ENCODE measurements at regions of chr3 and their contacts with region 1.

Region 1: GRCh38 chr3:187738331-187739093 is 6.8 kb downstream of the BCL6 start:
- DNase-seq: peak; percentile 42 to 88
- ATAC-seq: peak; percentile 53 to 66 (median 56)
- H3K4me3 ChIP-seq: peak overlapping the region; percentile 90
- H3K4me3 Mint-ChIP-seq: peak overlapping the region; percentile 99
- H3K27ac ChIP-seq: peak overlapping the region; percentile 78
- H3K27ac Mint-ChIP-seq: peak overlapping the region; percentile 97 to 100
- H3K4me1 ChIP-seq: peaks cover 57% of the 10 kb centered on the region
- H3K4me1 Mint-ChIP-seq: peaks cover 57 to 60% of the 10 kb centered on the region in 2 donors
- H3K27me3 ChIP-seq: no peaks in the 10 kb centered on the region
- H3K27me3 Mint-ChIP-seq: no peaks in the 10 kb centered on the region
- CTCF ChIP-seq: peak; percentile 71

Region 2: DNA sequence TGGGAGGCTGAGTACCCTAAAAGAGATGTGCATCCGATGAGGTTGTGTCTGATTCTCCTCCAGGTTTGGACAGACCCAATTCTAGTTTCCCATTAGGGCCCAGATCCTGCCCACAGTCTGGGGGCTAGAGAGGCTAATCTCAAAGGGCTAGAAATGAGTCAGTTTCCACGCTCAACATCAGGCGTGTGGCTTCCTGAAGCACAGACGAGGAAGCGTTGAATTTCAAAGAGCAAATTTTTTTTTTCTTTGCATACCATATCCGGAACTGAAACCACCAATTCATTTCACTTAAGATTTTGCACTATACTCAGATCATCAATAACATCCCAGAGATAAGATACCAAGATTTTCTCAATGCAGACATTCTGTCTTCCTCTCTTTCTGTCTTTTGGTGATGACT is 180.5 kb after region 1 on chr3:
- intact Hi-C with region 1: loop called (anchors 2 kb)
- DNase-seq: peak; percentile 38 to 80
- ATAC-seq: peak; percentile 87 to 88 (median 87)
- H3K4me3 ChIP-seq: peak overlapping the region; percentile 5
- H3K4me3 Mint-ChIP-seq: peak overlapping the region; percentile 80
- H3K27ac ChIP-seq: peak overlapping the region; percentile 85
- H3K27ac Mint-ChIP-seq: peak overlapping the region; percentile 86 to 88
- H3K4me1 ChIP-seq: peaks cover 18% of the 10 kb centered on the region
- H3K4me1 Mint-ChIP-seq: peaks cover 39 to 46% of the 10 kb centered on the region in 2 donors
- H3K27me3 ChIP-seq: no peaks in the 10 kb centered on the region
- H3K27me3 Mint-ChIP-seq: no peaks in the 10 kb centered on the region
- CTCF ChIP-seq: no peak

Region 3: DNA sequence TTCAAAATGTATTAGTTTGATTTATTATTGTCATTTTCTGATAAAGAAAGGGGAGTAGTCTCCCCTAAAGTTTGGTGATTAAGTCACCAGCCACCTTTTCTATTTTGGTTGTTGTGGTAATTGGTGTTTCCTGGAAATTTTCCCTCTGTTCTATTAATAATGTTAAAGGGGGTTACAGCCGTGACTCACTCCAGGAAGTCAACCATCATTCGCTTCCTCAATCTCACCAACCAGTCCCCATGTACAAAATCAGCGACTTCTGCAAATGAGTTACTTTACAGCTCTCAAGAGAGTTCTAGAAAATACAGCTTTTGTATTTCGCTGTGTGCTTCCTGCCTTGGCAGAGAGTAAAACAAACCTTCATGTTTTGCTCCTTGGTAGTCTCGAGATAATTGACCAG is 700.6 kb after region 1 on chr3:
- intact Hi-C with region 1: loop called (anchors 2 kb)
- DNase-seq: peak in 1 of 2 donors; percentile 67
- ATAC-seq: peak; percentile 80 to 87 (median 80)
- H3K4me3 ChIP-seq: no peak overlapping the region
- H3K4me3 Mint-ChIP-seq: peak overlapping the region; percentile 71
- H3K27ac ChIP-seq: peak overlapping the region; percentile 90
- H3K27ac Mint-ChIP-seq: peak overlapping the region; percentile 92 to 95
- H3K4me1 ChIP-seq: peaks cover 22% of the 10 kb centered on the region
- H3K4me1 Mint-ChIP-seq: peaks cover 58 to 62% of the 10 kb centered on the region in 2 donors
- H3K27me3 ChIP-seq: no peaks in the 10 kb centered on the region
- H3K27me3 Mint-ChIP-seq: no peaks in the 10 kb centered on the region
- CTCF ChIP-seq: no peak

Region 4: DNA sequence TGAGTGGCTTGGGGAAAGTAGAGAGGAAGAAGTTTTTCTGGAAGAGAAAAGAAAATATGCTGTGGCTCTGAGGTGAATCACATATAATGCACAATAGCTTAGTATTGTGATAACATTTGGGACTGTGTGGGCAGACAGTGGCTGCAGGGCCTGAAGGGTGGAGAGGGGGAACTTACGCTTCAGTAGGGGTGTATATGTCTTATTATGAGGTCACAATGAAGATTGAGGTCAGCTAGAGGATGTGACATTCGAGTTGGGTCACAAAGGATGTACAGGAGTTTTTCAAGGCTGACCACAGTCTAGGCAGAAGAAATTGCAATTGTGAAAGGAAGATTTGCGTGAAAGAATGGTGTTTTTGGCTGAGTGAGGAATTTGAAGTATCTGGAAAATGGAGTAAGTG is 830.2 kb after region 1 on chr3:
- intact Hi-C with region 1: loop called (anchors 2 kb)
- DNase-seq: peak in 1 of 2 donors; percentile 45
- ATAC-seq: peak; percentile 94 to 99 (median 96)
- H3K4me3 ChIP-seq: no peak overlapping the region
- H3K4me3 Mint-ChIP-seq: peak overlapping the region; percentile 11
- H3K27ac ChIP-seq: peak overlapping the region; percentile 28
- H3K27ac Mint-ChIP-seq: peak overlapping the region; percentile 73 to 83
- H3K4me1 ChIP-seq: peaks cover 11% of the 10 kb centered on the region
- H3K4me1 Mint-ChIP-seq: peaks cover 26 to 30% of the 10 kb centered on the region in 2 donors
- H3K27me3 ChIP-seq: no peaks in the 10 kb centered on the region
- H3K27me3 Mint-ChIP-seq: no peaks in the 10 kb centered on the region
- CTCF ChIP-seq: no peak

Region 5: GRCh38 chr3:188954590-188955208 is 1216.2 kb after region 1 on chr3:
- intact Hi-C with region 1: loop called (anchors 1 kb)
- DNase-seq: peak; percentile 59 to 87
- ATAC-seq: peak; percentile 73 to 85 (median 83)
- H3K4me3 ChIP-seq: no peak overlapping the region
- H3K4me3 Mint-ChIP-seq: no peak overlapping the region
- H3K27ac ChIP-seq: no peak overlapping the region
- H3K27ac Mint-ChIP-seq: no peak overlapping the region
- H3K4me1 ChIP-seq: peaks cover 3% of the 10 kb centered on the region
- H3K4me1 Mint-ChIP-seq: no peaks in the 10 kb centered on the region
- H3K27me3 ChIP-seq: no peaks in the 10 kb centered on the region
- H3K27me3 Mint-ChIP-seq: peaks cover 0 to 2% of the 10 kb centered on the region in 2 donors
- CTCF ChIP-seq: peak; percentile 87

Region 6: GRCh38 chr3:189132231-189132707 is 1393.8 kb after region 1 on chr3:
- intact Hi-C with region 1: loop called (anchors 1 kb)
- DNase-seq: peak; percentile 62 to 90
- ATAC-seq: peak; percentile 89 to 98 (median 91)
- H3K4me3 ChIP-seq: no peak overlapping the region
- H3K4me3 Mint-ChIP-seq: peak overlapping the region; percentile 71
- H3K27ac ChIP-seq: peak overlapping the region; percentile 80
- H3K27ac Mint-ChIP-seq: peak overlapping the region; percentile 89 to 92
- H3K4me1 ChIP-seq: peaks cover 11% of the 10 kb centered on the region
- H3K4me1 Mint-ChIP-seq: peaks cover 19% of the 10 kb centered on the region in 2 donors
- H3K27me3 ChIP-seq: no peaks in the 10 kb centered on the region
- H3K27me3 Mint-ChIP-seq: peaks cover 0 to 3% of the 10 kb centered on the region in 2 donors
- CTCF ChIP-seq: no peak

Measured in natural killer cell (primary cell).